Right lobe of liver (tissue), 6 donors: ENCODE measurements at regions of chr2 and their contacts with region 1.

Region 1: DNA sequence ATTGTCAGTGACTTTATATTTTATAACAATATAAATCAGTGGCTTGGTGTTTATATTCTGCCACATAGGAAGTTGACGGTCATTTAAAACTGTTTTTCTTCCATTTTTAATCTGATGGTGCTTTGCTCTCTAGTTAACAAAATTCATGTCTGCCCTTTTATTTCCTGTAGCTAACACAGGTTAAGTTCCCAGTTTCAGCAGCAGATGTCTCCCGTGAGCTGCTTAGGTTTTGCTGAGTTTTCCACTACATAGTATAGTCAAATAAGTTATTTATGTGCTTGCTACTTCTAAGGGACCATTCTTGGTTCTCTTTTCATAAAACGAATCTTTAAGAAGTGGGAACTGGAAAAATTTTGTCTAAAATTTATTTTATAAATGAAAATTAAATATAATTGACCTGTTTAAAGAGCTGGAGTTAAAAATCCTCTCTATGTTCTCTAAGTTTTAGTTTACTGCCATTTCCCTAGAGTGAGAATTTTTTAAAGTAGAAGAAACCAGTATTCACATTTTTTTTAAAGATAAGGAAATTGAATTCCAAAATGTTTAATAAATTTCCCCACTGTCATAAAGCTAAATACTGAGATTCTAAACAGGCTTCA is 20.6 kb downstream of the HTR2B start:
- DNase-seq: no peak
- ATAC-seq: peak; percentile 87 to 94 (median 89)
- H3K4me3 ChIP-seq: no peak overlapping the region
- H3K27ac ChIP-seq: no peak overlapping the region
- H3K4me1 ChIP-seq: peaks cover 0 to 8% (median 0%) of the 10 kb centered on the region in 4 donors
- H3K27me3 ChIP-seq: no peaks in the 10 kb centered on the region
- CTCF ChIP-seq: peak; percentile 72 to 88 (median 80)
- POLR2A ChIP-seq: no peak

Region 2: GRCh38 chr2:231056453-231057424 is 47.5 kb before region 1 on chr2 and contains the start of gene PSMD1:
- intact Hi-C with region 1: no loop called
- DNase-seq: peak; percentile 87 to 93 (median 92)
- ATAC-seq: peak; percentile 78 to 86 (median 83)
- H3K4me3 ChIP-seq: peak within 1 kb of the TSS; percentile 90 to 93 (median 92)
- H3K27ac ChIP-seq: peak within 1 kb of the TSS; percentile 93 to 99 (median 96)
- H3K4me1 ChIP-seq: peaks cover 0 to 54% (median 14%) of the 10 kb centered on the region in 4 donors
- H3K27me3 ChIP-seq: no peaks in the 10 kb centered on the region
- CTCF ChIP-seq: peak; percentile 94 to 99 (median 96)
- POLR2A ChIP-seq: peak; percentile 61
- total RNA-seq, gene PSMD1: 46.4 to 62.3 (median 55.5) TPM

Region 3: GRCh38 chr2:231198291-231199173 is 94.3 kb after region 1 on chr2 and contains the start of gene ARMC9:
- intact Hi-C with region 1: loop called in 1 of 2 experiments (anchors 10 kb)
- DNase-seq: peak; percentile 81 to 84 (median 84)
- ATAC-seq: peak; percentile 97 to 98 (median 97)
- H3K4me3 ChIP-seq: peak within 1 kb of the TSS; percentile 56 to 75 (median 67)
- H3K27ac ChIP-seq: no peak within 1 kb of the TSS
- H3K4me1 ChIP-seq: peaks cover 0 to 6% (median 0%) of the 10 kb centered on the region in 4 donors
- H3K27me3 ChIP-seq: no peaks in the 10 kb centered on the region
- CTCF ChIP-seq: no peak
- POLR2A ChIP-seq: peak; percentile 16
- total RNA-seq, gene ARMC9: 1.5 to 7.7 (median 2.4) TPM

Region 4: GRCh38 chr2:231452799-231453508 is 348.7 kb after region 1 on chr2:
- intact Hi-C with region 1: loop called in 1 of 2 experiments (anchors 10 kb)
- DNase-seq: peak in 1 of 3 donors; percentile 21
- ATAC-seq: peak in 2 of 4 donors; percentile 12 to 17
- H3K4me3 ChIP-seq: no peak overlapping the region
- H3K27ac ChIP-seq: no peak overlapping the region
- H3K4me1 ChIP-seq: no peaks in the 10 kb centered on the region
- H3K27me3 ChIP-seq: no peaks in the 10 kb centered on the region
- CTCF ChIP-seq: no peak
- POLR2A ChIP-seq: no peak